ENCODE measurements at regions of chr2 and their contacts with region 1.

Region 1: DNA sequence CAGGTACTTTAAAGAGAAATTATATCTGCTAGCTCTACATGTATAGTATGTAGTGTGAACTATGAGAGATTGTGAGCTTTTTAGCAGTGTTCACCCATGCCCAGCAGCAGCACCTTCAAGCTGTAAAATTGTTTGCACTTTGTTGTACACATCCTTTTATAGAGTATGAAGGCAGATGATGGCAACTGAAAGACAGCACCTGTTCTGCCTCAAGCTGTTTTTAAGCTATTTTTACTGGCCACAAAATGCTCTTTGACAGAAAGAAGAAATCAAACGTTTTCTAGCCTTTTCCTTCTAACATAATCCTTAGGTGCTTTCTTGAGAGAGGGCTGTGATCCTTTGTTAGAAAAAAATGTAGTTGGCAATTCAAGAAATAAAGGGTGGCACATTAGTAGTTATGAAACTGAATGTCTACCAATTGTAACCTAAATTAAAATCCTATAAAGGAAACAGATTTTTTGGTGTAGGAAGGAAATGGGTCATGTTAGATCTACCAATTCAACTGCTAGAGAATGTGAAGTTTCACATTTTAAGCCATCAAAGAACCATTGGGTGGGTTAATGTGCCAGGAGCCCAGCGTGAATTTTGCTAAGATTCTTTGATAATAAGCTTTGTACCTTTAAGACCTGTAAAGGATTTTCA is 59.5 kb downstream of the R3HDM1 start:
- DNase-seq: peak in 1 of 2 donors; percentile 20
- ATAC-seq: peak in 1 of 3 donors; percentile 34
- H3K4me3 ChIP-seq: no peak overlapping the region
- H3K4me3 Mint-ChIP-seq: no peak overlapping the region
- H3K27ac ChIP-seq: no peak overlapping the region
- H3K27ac Mint-ChIP-seq: no peak overlapping the region
- H3K4me1 ChIP-seq: peaks cover 3% of the 10 kb centered on the region
- H3K4me1 Mint-ChIP-seq: peaks cover 11 to 13% of the 10 kb centered on the region in 2 donors
- H3K27me3 ChIP-seq: no peaks in the 10 kb centered on the region
- H3K27me3 Mint-ChIP-seq: no peaks in the 10 kb centered on the region
- CTCF ChIP-seq: no peak

Region 2: GRCh38 chr2:135004005-135004746 is 586.6 kb before region 1 on chr2:
- intact Hi-C with region 1: loop called (anchors 10 kb)
- DNase-seq: peak; percentile 47 to 82
- ATAC-seq: peak; percentile 66 to 95 (median 76)
- H3K4me3 ChIP-seq: no peak overlapping the region
- H3K4me3 Mint-ChIP-seq: no peak overlapping the region
- H3K27ac ChIP-seq: no peak overlapping the region
- H3K27ac Mint-ChIP-seq: no peak overlapping the region
- H3K4me1 ChIP-seq: peaks cover 5% of the 10 kb centered on the region
- H3K4me1 Mint-ChIP-seq: peaks cover 5 to 8% of the 10 kb centered on the region in 2 donors
- H3K27me3 ChIP-seq: peaks cover 3% of the 10 kb centered on the region
- H3K27me3 Mint-ChIP-seq: peaks cover 18 to 36% of the 10 kb centered on the region in 2 donors
- CTCF ChIP-seq: peak; percentile 94

Measured in natural killer cell (primary cell).